ENCODE measurements at regions of chr1 and their contacts with region 1.

Region 1: GRCh38 chr1:21216835-21217811 is 40.4 kb upstream of the EIF4G3 start:
- DNase-seq: peak; percentile 65 to 86
- ATAC-seq: peak; percentile 39
- H3K4me3 ChIP-seq: no peak overlapping the region
- H3K27ac ChIP-seq: no peak overlapping the region
- H3K4me1 ChIP-seq: no peaks in the 10 kb centered on the region
- H3K27me3 ChIP-seq: no peaks in the 10 kb centered on the region

Region 2: DNA sequence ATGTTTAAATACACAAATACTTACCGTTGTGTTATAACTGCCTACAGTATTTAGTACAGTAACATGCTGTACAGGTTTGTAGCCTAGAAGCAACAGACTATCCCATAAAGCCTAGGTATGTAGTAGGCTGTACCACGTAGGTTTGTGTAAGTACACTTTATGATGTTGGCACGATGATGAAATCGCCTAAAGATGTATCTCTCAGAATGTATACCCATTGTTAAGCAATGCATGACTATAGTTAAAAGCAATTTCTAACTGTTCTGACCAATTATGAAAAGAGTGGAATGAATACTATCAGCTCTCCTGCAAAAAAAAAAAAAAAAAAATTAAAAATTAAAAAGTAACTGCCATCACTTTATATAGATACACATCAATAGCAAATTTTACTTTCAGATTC is 441.4 kb before region 1 on chr1:
- intact Hi-C with region 1: no loop called
- DNase-seq: no peak
- ATAC-seq: no peak
- H3K4me3 ChIP-seq: no peak overlapping the region
- H3K27ac ChIP-seq: no peak overlapping the region
- H3K4me1 ChIP-seq: peaks cover 0 to 5% of the 10 kb centered on the region in 2 donors
- H3K27me3 ChIP-seq: no peaks in the 10 kb centered on the region

Region 3: GRCh38 chr1:20964540-20965484 is 252.3 kb before region 1 on chr1:
- intact Hi-C with region 1: no loop called
- DNase-seq: no peak
- ATAC-seq: no peak
- H3K4me3 ChIP-seq: no peak overlapping the region
- H3K27ac ChIP-seq: no peak overlapping the region
- H3K4me1 ChIP-seq: no peaks in the 10 kb centered on the region
- H3K27me3 ChIP-seq: no peaks in the 10 kb centered on the region

Region 4: DNA sequence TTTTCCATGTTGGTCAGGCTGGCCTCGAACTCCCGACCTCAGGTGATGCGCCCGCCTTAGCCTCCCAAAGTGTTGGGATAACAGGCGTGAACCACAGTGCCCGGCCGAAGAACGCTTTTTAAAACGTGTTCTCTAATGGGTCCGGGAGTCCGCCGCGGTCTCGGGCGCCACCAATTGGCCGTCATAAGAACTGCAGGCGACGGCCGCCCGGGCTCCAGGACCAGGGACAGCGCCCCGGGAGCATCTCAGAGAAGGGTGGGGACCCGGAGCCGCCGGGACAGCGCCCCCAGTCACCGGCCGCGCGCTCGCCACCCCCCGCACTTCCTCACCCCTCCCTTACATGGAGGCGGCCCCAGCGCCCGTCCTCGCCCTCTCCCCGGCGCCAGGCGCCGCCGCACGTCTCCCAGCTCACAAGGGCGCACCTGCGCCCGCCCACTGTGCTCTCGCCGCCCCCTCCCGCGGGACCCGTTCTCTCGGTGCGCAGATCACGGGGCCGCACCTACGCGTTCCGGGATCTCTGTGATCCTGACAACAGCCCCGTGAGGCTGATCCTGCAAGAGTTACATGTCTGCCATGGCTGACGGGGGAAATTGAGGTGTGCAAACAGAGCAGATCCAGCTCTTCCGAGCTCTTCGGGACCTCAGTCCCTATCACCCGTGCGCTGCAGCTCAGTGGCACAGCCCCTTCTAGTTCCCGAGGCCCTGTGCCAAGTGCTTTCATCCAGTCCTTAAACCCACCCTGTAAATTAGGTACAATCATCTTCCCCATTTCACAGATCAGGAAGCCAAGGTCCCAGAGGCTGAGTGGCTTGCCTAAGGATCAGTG is 442.2 kb after region 1 on chr1:
- intact Hi-C with region 1: loop called in 1 of 2 experiments (anchors 10 kb)
- DNase-seq: peak; percentile 71 to 91
- ATAC-seq: peak; percentile 84
- H3K4me3 ChIP-seq: no peak overlapping the region
- H3K27ac ChIP-seq: no peak overlapping the region
- H3K4me1 ChIP-seq: no peaks in the 10 kb centered on the region
- H3K27me3 ChIP-seq: no peaks in the 10 kb centered on the region